B cell (primary cell): ENCODE measurements at regions of chr3 and their contacts with region 1.

Region 1: GRCh38 chr3:46923559-46924350 is 46.2 kb downstream of the PTH1R start:
- DNase-seq: peak; percentile 66
- ATAC-seq: no peak
- H3K4me3 ChIP-seq: no peak overlapping the region
- H3K4me3 Mint-ChIP-seq: peak overlapping the region; percentile 21
- H3K27ac ChIP-seq: peak overlapping the region; percentile 85 to 92
- H3K27ac Mint-ChIP-seq: peak overlapping the region; percentile 83
- H3K4me1 ChIP-seq: peaks cover 57 to 59% of the 10 kb centered on the region in 2 donors
- H3K4me1 Mint-ChIP-seq: peaks cover 60% of the 10 kb centered on the region
- H3K27me3 ChIP-seq: no peaks in the 10 kb centered on the region
- H3K27me3 Mint-ChIP-seq: no peaks in the 10 kb centered on the region
- CTCF ChIP-seq: peak; percentile 70

Region 2: DNA sequence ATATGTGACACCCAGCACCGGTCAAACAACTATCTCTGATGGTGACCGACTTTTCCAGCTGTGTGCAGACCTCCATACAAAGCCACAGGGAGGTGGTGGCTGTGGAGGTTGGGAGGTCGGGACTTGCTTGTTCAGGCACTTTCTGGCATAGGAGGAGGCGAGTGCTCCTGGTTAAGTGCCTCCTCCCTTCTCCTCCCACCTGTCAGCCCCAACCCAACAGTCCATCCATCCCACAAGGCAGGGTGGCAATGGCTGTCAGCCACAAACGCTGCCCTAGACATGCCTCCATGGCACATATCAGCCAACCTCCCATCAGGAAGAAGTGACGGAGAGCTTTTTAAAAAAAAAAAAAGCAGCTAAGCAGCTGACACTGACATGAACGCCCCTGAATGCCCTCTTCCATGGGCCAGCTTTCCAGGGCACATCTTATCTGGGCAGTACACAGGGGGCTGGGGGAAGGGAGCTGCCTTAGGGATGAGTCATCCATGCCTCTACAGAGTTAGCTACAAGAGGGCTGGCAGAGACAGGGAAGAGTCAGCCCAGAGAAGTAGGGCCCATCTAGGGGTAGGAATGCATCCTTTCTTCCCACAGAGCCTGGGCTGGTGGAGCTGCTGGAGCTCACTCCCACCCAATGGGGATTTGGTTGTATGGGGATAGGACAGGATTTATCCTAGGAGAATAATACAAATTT is 11.6 kb after region 1 on chr3:
- CTCF ChIA-PET with region 1: interaction called, 22 read pairs
- POLR2A ChIA-PET with region 1: interaction called, 5 read pairs
- intact Hi-C with region 1: no loop called
- DNase-seq: no peak
- ATAC-seq: no peak
- H3K4me3 ChIP-seq: no peak overlapping the region
- H3K4me3 Mint-ChIP-seq: no peak overlapping the region
- H3K27ac ChIP-seq: peak overlapping the region in 1 of 2 donors; percentile 62
- H3K27ac Mint-ChIP-seq: peak overlapping the region; percentile 50
- H3K4me1 ChIP-seq: peaks cover 65 to 94% of the 10 kb centered on the region in 2 donors
- H3K4me1 Mint-ChIP-seq: peaks cover 82% of the 10 kb centered on the region
- H3K27me3 ChIP-seq: no peaks in the 10 kb centered on the region
- H3K27me3 Mint-ChIP-seq: no peaks in the 10 kb centered on the region
- CTCF ChIP-seq: no peak

Region 3: GRCh38 chr3:46953234-46954010 is 29.7 kb after region 1 on chr3:
- CTCF ChIA-PET with region 1: interaction called, 12 read pairs
- POLR2A ChIA-PET with region 1: interaction called, 3 read pairs
- intact Hi-C with region 1: no loop called
- DNase-seq: peak; percentile 69
- ATAC-seq: peak; percentile 75
- H3K4me3 ChIP-seq: no peak overlapping the region
- H3K4me3 Mint-ChIP-seq: peak overlapping the region; percentile 64
- H3K27ac ChIP-seq: peak overlapping the region; percentile 66 to 83
- H3K27ac Mint-ChIP-seq: peak overlapping the region; percentile 80
- H3K4me1 ChIP-seq: peaks cover 75 to 89% of the 10 kb centered on the region in 2 donors
- H3K4me1 Mint-ChIP-seq: peaks cover 88% of the 10 kb centered on the region
- H3K27me3 ChIP-seq: no peaks in the 10 kb centered on the region
- H3K27me3 Mint-ChIP-seq: no peaks in the 10 kb centered on the region
- CTCF ChIP-seq: no peak

Region 4: DNA sequence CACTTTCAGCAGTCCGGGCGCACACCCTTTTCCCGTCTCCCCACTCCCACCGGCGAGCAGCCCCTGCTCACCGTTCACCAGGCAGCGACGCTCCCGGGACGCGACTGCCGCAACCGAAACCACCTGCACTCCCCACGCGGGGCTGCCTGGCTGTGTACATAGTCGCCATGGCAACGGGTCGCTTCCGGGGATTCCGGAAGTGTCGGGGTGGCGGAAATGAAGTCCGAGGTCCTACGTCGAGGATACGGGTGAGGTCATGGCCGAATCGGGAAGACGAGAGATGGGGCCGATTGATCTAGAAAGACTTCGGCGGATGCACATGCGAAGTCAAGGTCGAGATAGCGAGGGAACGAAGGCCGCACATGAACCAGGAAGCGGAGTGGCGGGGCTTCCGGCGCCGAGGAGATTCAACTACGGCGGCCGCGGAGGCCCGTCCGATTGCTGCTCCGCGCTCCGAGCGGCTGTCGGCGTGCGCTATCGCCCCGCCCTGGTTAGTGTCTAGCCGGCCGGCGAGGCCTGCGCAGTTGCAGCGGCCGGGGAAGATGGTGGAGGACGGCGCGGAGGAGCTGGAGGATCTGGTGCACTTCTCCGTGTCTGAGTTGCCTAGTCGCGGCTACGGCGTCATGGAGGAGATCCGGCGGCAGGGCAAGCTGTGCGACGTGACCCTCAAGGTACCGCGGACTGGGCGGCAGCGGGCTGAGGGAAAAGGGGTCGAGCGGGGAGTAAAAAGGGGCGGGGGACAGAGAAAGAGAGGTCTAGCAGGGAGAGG is 358.9 kb after region 1 on chr3 and contains the starts of genes KIF9 and KLHL18:
- CTCF ChIA-PET with region 1: no interaction called
- POLR2A ChIA-PET with region 1: no interaction called
- intact Hi-C with region 1: loop called (anchors 2 kb)
- DNase-seq: peak; percentile 100
- ATAC-seq: peak; percentile 85
- H3K4me3 ChIP-seq: peak within 1 kb of the TSS; percentile 74 to 98 (median 89)
- H3K4me3 Mint-ChIP-seq: peak within 1 kb of the TSS; percentile 99
- H3K27ac ChIP-seq: peak within 1 kb of the TSS; percentile 99
- H3K27ac Mint-ChIP-seq: peak within 1 kb of the TSS; percentile 100
- H3K4me1 ChIP-seq: peaks cover 33 to 49% of the 10 kb centered on the region in 2 donors
- H3K4me1 Mint-ChIP-seq: peaks cover 45% of the 10 kb centered on the region
- H3K27me3 ChIP-seq: no peaks in the 10 kb centered on the region
- H3K27me3 Mint-ChIP-seq: no peaks in the 10 kb centered on the region
- CTCF ChIP-seq: no peak
- total RNA-seq, gene KIF9: 1.3 and 3.0 TPM in 2 replicates
- total RNA-seq, gene KLHL18: 30.9 and 33.0 TPM in 2 replicates